ENCODE measurements at regions of chr16 and their contacts with region 1.

Region 1: DNA sequence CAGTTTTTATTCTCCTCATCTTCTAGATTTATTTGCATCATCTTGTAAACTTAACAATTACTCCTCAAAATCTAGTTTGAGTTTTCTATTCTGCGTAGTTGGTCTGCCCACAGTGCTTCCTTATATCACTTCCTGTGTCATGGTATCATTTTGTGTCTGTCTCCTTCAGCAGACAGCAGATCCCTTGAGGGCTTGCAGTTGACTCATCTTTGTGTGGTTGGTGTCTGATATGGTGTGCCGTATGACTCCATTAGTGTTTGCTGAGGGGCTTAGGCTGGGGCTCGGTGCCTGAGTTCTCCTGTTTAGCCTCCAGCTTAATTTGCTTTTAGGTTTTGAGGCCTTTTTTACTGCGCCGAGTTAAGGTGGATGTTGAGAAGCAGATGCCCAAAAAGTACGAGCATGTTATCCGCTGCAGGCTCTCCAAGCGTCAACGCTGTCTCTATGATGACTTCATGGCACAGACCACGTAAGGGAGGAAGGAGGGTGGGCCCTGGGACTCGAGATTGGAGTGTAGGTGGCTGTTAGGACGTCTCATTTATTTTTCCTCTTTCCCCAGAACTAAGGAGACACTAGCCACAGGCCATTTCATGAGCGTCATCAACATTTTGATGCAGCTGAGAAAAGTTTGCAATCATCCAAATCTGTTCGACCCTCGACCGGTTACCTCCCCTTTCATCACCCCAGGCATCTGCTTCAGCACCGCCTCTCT is 16.9 kb downstream of the SRCAP start:
- DNase-seq: no peak
- ATAC-seq: peak; percentile 34

Region 2: DNA sequence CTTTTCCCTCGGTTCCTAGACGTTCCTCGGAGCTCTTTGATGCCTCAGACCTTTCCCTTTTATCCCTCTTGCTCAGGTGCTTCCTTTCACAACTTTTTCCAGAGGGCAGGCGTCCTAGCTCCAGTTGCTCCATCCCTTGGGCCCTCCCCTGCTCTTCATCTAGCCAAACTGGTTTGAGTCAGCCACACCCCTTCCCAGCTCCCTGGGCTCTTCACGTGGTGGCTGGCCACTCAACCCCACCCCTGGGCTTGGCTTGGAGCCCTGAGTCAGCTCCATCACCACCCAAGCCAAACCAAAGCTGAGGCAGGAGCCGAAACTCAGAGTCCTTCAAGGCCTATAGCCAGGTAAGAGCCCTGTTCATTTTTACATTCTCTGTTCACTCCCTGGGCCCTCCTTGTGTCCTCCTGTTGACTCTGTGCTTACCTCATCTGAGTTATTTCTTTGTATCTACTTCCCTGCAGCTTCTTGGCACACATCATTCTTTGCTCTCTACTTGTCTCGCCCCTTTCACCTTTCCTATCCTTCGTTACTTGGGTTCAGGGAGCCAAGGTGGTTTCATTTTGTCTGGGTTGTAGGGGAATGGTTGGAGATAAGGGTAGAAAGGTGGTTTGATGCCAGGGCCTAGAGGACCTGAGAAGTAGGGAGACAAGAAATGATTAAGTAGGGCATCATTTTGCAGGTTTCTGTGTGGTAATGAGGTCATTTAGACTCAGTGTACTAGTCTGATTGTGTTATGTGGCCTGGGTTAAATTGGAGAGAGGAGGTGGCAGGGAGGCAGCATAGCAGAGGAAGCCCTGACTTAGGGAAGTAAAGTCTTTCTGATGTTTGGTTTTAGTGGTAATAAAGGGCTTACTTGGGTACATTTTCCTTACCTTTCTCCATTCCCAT is 24.7 kb after region 1 on chr16:
- intact Hi-C with region 1: no loop called
- DNase-seq: peak; percentile 85
- ATAC-seq: peak; percentile 89

Region 3: GRCh38 chr16:30805370-30806169 is 89.7 kb after region 1 on chr16:
- intact Hi-C with region 1: loop called (anchors 10 kb)
- DNase-seq: peak; percentile 92
- ATAC-seq: peak; percentile 98

Measured in sciatic nerve (tissue), 2 donors.